HEK293T (cell line): ENCODE measurements at regions of chr1 and their contacts with region 1.

Region 1: GRCh38 chr1:31422505-31423319 is 9.7 kb downstream of the SERINC2 start:
- DNase-seq: peak; percentile 91

Region 2: GRCh38 chr1:31394628-31395193 is 28.0 kb before region 1 on chr1:
- CTCF ChIA-PET with region 1: interaction called, 44 read pairs
- POLR2A ChIA-PET with region 1: interaction called, 7 read pairs
- DNase-seq: peak; percentile 97

Region 3: GRCh38 chr1:31435551-31436409 is 13.1 kb after region 1 on chr1:
- CTCF ChIA-PET with region 1: no interaction called
- POLR2A ChIA-PET with region 1: no interaction called
- DNase-seq: no peak

Region 4: DNA sequence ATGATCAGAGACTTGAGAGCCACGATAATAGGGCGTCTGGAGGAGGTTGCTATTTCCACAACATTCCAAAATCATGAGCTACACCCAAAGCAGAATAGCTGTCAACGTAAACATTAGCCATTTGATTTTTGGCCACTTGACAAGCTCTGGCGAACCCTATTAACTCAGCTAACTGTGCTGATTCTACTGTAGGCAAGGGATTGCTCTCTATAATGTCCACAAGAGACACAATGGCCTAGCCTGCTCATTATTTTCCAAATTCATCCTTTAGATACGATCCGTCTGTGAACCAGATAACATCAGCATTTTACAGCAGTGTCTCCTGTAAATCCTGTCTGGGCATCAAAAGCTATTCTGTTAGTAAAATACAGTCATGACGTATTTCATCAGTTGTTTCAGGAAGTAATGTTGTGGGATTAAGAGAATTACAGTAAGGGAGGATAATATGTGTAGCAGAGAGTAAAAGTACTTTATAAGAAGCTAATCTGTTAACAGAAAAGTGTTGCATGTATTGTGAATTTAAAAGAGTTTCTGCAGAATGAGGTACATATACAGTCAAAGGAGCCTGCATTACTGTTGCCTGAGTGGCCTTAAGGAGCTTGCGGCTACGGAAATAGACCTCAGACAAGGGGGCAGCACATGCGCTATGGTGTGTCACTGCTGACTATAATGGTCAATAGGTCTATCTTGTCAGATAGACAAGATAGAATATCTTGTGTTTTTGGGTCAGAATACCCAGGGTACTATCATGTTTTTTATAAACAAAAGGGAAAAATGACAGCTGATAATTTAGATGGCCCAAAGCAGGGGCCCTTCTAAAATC is 108.7 kb after region 1 on chr1:
- CTCF ChIA-PET with region 1: interaction called, 10 read pairs
- POLR2A ChIA-PET with region 1: no interaction called
- DNase-seq: no peak

Region 5: DNA sequence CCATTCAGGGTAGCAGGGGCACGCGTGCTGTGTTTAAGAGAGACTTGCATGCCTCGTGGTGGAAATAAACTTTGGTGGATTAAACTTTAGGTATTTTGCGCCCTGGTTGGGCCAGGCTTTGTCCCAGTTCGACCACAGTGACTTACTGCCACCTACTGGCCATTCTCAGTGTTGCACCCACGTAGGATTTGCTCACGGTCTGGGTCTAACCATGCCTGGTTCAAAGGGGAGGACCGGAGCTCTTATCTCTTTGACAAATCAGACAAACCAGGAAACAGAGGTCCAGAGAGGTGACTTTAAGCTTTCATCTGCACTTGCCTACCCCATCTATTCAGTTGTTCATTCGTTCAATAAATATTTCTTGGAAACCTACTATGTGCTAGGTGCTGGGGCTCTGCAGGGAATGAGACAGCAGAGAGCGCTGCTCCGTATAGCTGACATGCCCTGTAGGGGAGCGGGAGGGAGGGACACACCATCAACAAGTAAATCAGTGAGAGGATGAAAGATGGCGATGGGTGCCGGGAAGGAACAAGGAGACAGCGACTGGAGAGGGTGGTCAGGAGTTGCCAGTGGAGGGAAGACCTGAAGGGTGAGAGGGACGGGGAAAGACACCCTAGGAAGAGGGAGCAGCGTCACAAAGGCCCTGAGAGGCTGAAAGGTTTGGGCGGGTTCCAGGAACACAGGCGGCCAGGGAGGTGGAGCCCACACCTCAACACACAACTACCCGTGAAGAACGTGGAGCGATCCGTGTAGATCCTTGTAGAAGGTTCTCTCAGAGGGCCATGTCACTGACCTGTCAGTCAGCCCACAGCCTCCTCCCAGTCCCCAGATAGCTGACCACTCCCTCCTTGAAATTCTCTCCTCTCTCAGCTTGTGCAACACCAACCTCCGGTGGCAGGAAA is 126.4 kb after region 1 on chr1:
- CTCF ChIA-PET with region 1: interaction called, 17 read pairs
- POLR2A ChIA-PET with region 1: no interaction called
- DNase-seq: peak; percentile 96